PC-3 (cell line): ENCODE measurements at regions of chr2 and their contacts with region 1.

Region 1: DNA sequence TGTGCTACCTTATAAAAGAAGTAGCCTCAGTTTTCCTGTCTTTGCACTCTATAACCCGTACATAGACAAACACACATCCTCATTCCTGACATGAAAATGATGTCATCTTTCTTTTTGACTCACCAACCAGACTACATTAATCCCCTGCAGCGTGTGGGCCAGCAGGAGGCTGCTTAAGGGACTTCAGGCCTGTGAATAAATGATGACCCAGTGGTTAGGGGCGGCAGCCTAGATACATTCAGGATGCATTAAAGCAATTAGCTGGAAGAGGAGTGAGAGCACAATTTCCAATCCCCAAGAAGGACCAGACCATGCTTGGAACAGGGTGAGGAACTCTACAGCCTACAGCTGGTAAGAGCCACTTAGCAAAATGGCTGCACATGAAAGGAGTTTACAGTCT is 57.3 kb upstream of the KLF7 start:
- DNase-seq: peak; percentile 41
- ATAC-seq: no peak
- H3K4me3 ChIP-seq: no peak overlapping the region
- H3K27ac ChIP-seq: no peak overlapping the region
- H3K4me1 ChIP-seq: peaks cover 26% of the 10 kb centered on the region
- H3K27me3 ChIP-seq: no peaks in the 10 kb centered on the region
- CTCF ChIP-seq: no peak

Region 2: DNA sequence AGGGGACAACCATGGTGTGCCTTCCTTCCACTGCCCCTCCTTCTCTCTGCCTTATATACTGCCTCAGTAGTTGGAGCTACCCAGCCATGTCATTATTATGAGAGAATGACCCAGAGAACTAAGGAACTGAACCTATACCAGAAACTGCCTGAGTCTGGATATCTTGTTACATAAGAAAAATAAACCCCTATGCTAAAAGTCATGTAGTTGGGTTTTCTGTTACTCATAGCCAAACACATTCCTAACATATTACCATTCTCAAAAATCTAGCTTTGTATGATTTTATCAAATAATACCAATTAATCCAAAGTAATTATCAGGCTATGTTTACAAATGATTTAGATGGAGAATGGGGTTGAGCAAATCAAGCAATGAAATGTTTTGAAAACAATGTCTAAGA is 42.3 kb before region 1 on chr2:
- CTCF ChIA-PET with region 1: no interaction called
- POLR2A ChIA-PET with region 1: no interaction called
- intact Hi-C with region 1: loop called (anchors 1 kb)
- DNase-seq: peak; percentile 27
- ATAC-seq: no peak
- H3K4me3 ChIP-seq: no peak overlapping the region
- H3K27ac ChIP-seq: peak overlapping the region; percentile 60
- H3K4me1 ChIP-seq: peaks cover 51% of the 10 kb centered on the region
- H3K27me3 ChIP-seq: no peaks in the 10 kb centered on the region
- CTCF ChIP-seq: no peak

Region 3: DNA sequence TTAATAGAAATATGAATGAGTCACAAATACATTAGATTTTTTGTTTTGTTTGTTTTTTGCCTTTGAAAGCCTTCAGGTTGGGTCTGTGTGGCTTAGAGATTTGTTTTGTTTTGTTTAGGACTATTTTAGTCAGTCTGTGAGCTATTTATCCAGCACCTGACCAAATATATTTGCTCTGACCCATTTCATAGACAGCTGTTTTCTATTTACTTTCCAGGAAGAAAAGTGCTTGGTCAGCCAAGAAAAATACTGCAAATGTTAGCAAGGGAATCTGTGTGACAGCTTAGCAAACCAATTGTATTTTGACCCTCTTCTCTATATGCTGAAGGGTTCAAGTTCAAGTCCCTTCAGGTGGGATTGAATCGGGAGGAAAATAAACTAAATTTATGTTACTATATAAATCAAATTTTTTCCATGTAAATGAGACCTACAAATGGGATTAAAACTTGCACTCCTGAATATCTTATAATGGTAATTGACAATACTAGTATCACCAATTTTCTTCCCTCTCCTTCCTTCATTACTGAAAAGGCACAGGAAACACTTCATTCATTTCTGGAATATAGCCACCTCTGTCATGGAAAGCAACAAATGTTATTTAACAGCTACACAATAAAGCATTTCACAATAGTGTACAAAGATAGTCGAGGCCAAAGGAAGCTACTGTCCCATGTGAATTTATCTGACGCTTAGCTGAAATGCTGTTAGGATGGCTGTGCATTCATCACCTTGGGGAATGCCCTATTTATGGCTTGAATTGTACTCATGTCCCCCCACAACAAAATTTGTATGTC is 34.2 kb before region 1 on chr2:
- CTCF ChIA-PET with region 1: no interaction called
- POLR2A ChIA-PET with region 1: no interaction called
- intact Hi-C with region 1: loop called (anchors 2 kb)
- DNase-seq: peak; percentile 80
- ATAC-seq: peak; percentile 96
- H3K4me3 ChIP-seq: no peak overlapping the region
- H3K27ac ChIP-seq: no peak overlapping the region
- H3K4me1 ChIP-seq: peaks cover 27% of the 10 kb centered on the region
- H3K27me3 ChIP-seq: no peaks in the 10 kb centered on the region
- CTCF ChIP-seq: no peak

Region 4: GRCh38 chr2:207258263-207258991 is 35.4 kb after region 1 on chr2:
- CTCF ChIA-PET with region 1: no interaction called
- POLR2A ChIA-PET with region 1: interaction called, 6 read pairs
- intact Hi-C with region 1: loop called (anchors 1 kb)
- DNase-seq: peak; percentile 96
- ATAC-seq: peak; percentile 76
- H3K4me3 ChIP-seq: no peak overlapping the region
- H3K27ac ChIP-seq: peak overlapping the region; percentile 55
- H3K4me1 ChIP-seq: peaks cover 82% of the 10 kb centered on the region
- H3K27me3 ChIP-seq: no peaks in the 10 kb centered on the region
- CTCF ChIP-seq: no peak

Region 5: DNA sequence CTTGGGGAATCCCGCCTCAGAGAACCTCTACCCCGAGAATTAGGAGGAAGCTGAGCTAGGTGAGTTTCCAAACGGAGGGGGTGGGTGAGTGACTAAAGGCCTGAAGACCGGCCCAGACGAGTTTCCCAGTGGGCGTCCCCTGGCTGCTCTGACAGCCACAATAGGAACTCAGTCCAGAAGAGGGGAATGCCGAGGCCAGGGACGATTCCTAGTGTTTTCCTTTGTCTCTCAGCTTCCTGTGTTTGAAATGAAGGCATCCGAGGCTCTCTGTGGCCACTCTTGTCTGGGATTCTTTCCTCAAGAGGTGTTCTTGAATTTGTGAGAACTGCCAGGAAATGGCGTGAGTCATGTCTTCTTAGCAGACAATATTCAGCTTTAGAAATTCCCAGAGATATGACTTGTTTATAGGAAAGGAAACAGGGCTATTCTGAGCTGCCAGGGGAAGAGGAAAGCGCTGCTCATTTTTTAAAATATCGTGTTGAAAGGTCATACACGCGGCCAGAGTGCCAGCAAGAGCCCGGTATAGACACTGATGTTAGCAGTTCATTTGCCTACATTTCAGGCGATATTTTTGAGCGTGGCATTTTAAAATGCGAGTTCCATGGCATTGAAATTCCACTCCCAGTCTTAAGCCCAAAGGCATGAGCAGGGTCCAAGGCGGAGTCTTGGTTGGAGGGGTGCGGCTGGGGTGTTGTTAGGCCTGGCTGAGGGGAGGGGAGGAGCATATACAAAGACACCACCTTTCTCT is 111.7 kb after region 1 on chr2:
- CTCF ChIA-PET with region 1: no interaction called
- POLR2A ChIA-PET with region 1: no interaction called
- intact Hi-C with region 1: loop called (anchors 5 kb)
- DNase-seq: peak; percentile 94
- ATAC-seq: peak; percentile 71
- H3K4me3 ChIP-seq: peak overlapping the region; percentile 57
- H3K27ac ChIP-seq: peak overlapping the region; percentile 92
- H3K4me1 ChIP-seq: peaks cover 55% of the 10 kb centered on the region
- H3K27me3 ChIP-seq: no peaks in the 10 kb centered on the region
- CTCF ChIP-seq: no peak

Region 6: DNA sequence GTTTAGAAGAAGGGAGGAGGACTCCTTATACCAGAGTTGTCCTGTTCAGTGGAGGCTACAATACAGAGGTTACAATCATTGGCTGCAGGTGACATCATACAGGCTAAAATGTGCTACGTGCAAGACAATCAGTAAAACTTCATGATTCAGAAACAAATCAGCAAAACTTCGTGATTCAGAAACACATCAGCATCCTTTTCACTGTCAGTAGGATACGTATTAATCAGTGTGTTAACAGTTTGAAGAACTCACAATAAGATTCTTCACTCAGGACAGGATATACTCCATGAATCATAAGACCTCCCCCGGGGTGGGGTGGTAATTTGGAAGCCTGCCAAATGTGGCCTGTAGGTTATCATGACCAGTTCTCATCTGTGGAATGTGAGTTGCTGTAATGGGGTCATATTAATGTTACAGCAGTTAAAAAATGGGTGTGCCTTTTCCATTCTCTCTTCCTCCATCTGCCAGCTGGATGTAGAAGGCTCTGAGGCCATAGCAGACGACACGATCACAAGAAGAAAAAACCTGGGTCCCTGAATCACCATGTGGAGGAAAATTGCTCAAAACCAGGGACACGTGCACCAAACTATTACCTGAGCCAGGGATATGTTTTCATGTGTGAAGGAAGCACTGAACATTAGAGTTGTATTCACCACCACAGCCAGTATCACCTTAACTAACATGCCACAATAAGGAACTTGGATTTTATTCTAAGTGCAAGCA is 171.9 kb after region 1 on chr2:
- CTCF ChIA-PET with region 1: no interaction called
- POLR2A ChIA-PET with region 1: no interaction called
- intact Hi-C with region 1: loop called (anchors 2 kb)
- DNase-seq: peak; percentile 99
- ATAC-seq: peak; percentile 86
- H3K4me3 ChIP-seq: peak overlapping the region; percentile 40
- H3K27ac ChIP-seq: peak overlapping the region; percentile 99
- H3K4me1 ChIP-seq: peaks cover 23% of the 10 kb centered on the region
- H3K27me3 ChIP-seq: no peaks in the 10 kb centered on the region
- CTCF ChIP-seq: no peak

Region 7: GRCh38 chr2:207600231-207600630 is 377.2 kb after region 1 on chr2:
- CTCF ChIA-PET with region 1: no interaction called
- POLR2A ChIA-PET with region 1: no interaction called
- intact Hi-C with region 1: no loop called
- DNase-seq: no peak
- ATAC-seq: no peak
- H3K4me3 ChIP-seq: no peak overlapping the region
- H3K27ac ChIP-seq: no peak overlapping the region
- H3K4me1 ChIP-seq: no peaks in the 10 kb centered on the region
- H3K27me3 ChIP-seq: no peaks in the 10 kb centered on the region
- CTCF ChIP-seq: no peak